ENCODE measurements at regions of chr12 and their contacts with region 1.

Region 1: GRCh38 chr12:32309811-32310736 is 89.3 kb upstream of the FGD4 start:
- DNase-seq: no peak
- ATAC-seq: no peak

Region 2: GRCh38 chr12:31651893-31652521 is 658.1 kb before region 1 on chr12:
- intact Hi-C with region 1: loop called (anchors 2 kb)
- DNase-seq: no peak
- ATAC-seq: peak; percentile 20

Region 3: DNA sequence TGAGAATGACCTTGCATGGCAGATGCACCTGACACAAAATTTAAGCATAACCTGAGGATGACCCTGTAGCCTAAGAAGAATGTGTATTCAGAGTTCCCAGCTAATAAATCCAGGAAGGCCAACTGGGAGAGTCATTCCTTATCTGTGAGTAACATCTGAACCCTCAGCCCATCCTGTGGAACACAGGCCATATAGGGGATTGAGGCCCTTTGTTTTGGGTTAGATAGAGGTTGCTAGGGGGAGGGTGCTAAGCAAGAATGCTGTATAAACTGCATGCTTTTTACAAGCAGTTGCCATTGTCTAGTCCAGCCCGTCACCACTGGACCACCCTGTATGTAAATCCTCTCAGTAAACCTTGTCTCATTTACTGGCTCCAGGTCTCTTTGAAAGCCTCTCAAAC is 126.4 kb before region 1 on chr12:
- intact Hi-C with region 1: no loop called
- DNase-seq: no peak
- ATAC-seq: no peak

Region 4: GRCh38 chr12:32264961-32265360 is 45.1 kb before region 1 on chr12:
- intact Hi-C with region 1: no loop called
- DNase-seq: no peak
- ATAC-seq: no peak

Measured in Right ventricle myocardium inferior (tissue), 1 donor.